CD8-positive, alpha-beta memory T cell (primary cell): ENCODE measurements at regions of chr1 and their contacts with region 1.

Region 1: DNA sequence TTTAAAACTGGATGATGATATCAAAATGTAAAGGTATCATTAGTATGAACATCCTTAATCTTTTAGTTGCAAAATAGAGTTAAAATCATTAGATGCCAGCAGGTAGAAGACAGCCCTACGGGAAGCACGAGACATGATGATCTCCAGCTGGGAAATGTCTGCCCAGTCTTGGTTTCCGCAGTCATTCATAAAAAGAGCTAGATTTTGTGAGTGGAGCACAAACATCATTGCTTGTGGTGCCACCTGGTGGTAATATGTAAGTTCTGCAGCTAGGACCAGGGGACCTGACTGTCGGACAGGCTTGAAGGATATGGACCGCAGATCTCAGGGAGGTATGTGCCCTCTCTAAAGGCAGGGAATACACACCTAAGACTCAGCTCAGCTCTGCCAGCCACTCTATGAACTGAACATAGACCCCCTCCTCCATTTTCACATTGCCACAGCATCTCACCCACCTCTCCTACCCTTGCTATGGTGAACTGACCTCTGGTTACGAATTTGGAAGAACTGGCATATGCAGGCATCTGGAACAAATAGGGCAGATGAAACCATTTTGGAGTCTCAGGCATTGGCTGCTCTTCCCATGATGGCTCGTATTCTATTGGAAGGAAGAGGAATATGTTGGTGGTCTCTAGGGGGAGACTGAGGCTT is 9.2 kb downstream of the FCMR start:
- DNase-seq: peak in 4 of 5 donors; percentile 51 to 74 (median 67)
- H3K4me3 ChIP-seq: no peak overlapping the region
- H3K4me3 Mint-ChIP-seq: peak overlapping the region; percentile 21 to 64 (median 43)
- H3K27ac ChIP-seq: no peak overlapping the region
- H3K27ac Mint-ChIP-seq: peak overlapping the region in 6 of 8 donors; percentile 69 to 95 (median 90)
- H3K4me1 ChIP-seq: peaks cover 91% of the 10 kb centered on the region
- H3K4me1 Mint-ChIP-seq: peaks cover 85 to 95% (median 95%) of the 10 kb centered on the region in 3 donors
- H3K27me3 ChIP-seq: no peaks in the 10 kb centered on the region
- H3K27me3 Mint-ChIP-seq: peaks cover 0 to 1% of the 10 kb centered on the region in 2 donors

Region 2: DNA sequence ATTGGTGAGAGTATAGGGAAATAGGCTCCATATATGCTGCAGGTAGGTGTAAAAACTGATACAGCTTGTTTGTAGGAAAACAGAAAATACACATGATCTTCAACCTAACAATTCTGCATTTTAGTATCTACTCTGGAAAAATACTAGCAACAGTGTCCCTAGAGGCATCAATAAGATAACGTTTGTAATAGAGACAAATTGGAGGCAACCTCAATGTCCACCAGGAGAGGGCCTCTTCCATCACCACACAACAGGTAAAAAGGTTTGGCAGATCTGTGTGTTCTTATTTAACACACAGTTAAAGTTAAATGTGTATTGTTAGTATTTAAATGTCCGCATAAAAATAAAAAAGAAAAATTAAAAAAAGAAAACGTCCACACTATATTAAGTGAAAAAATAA is 305.7 kb before region 1 on chr1:
- CTCF ChIA-PET with region 1: no interaction called
- POLR2A ChIA-PET with region 1: no interaction called
- DNase-seq: no peak
- H3K4me3 ChIP-seq: no peak overlapping the region
- H3K4me3 Mint-ChIP-seq: no peak overlapping the region
- H3K27ac ChIP-seq: no peak overlapping the region
- H3K27ac Mint-ChIP-seq: no peak overlapping the region
- H3K4me1 ChIP-seq: peaks cover 7% of the 10 kb centered on the region
- H3K4me1 Mint-ChIP-seq: peaks cover 11 to 18% (median 18%) of the 10 kb centered on the region in 3 donors
- H3K27me3 ChIP-seq: no peaks in the 10 kb centered on the region
- H3K27me3 Mint-ChIP-seq: no peaks in the 10 kb centered on the region

Region 3: GRCh38 chr1:206635080-206635977 is 277.2 kb before region 1 on chr1 and contains the start of gene DYRK3:
- CTCF ChIA-PET with region 1: interaction called, 11 read pairs
- POLR2A ChIA-PET with region 1: no interaction called
- DNase-seq: peak; percentile 84 to 94 (median 87)
- H3K4me3 ChIP-seq: peak within 1 kb of the TSS; percentile 62
- H3K4me3 Mint-ChIP-seq: peak within 1 kb of the TSS; percentile 85 to 96 (median 89)
- H3K27ac ChIP-seq: peak within 1 kb of the TSS; percentile 59
- H3K27ac Mint-ChIP-seq: peak within 1 kb of the TSS; percentile 61 to 95 (median 90)
- H3K4me1 ChIP-seq: peaks cover 13% of the 10 kb centered on the region
- H3K4me1 Mint-ChIP-seq: peaks cover 13 to 27% (median 18%) of the 10 kb centered on the region in 3 donors
- H3K27me3 ChIP-seq: no peaks in the 10 kb centered on the region
- H3K27me3 Mint-ChIP-seq: peaks cover 10 to 13% of the 10 kb centered on the region in 2 donors
- total RNA-seq, gene DYRK3: 11.0 to 11.7 TPM

Region 4: DNA sequence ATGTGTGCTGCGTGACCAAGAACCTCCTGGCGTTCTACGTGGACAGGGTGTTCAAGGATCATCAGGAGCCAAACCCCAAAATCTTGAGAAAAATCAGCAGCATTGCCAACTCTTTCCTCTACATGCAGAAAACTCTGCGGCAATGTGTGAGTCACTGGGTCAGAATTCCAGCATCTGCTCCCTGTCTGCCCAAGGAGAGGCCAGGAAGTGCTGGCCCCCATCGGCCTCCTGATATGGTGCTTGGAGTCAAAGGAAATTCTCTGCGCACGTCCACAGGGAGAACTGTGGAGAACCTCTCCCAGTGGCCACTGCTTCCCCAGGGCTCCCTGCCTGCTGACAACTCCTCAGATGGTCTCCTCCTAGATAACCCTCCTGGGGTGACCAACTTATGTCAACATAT is 72.7 kb before region 1 on chr1:
- CTCF ChIA-PET with region 1: no interaction called
- POLR2A ChIA-PET with region 1: no interaction called
- DNase-seq: no peak
- H3K4me3 ChIP-seq: no peak overlapping the region
- H3K4me3 Mint-ChIP-seq: no peak overlapping the region
- H3K27ac ChIP-seq: no peak overlapping the region
- H3K27ac Mint-ChIP-seq: no peak overlapping the region
- H3K4me1 ChIP-seq: no peaks in the 10 kb centered on the region
- H3K4me1 Mint-ChIP-seq: no peaks in the 10 kb centered on the region
- H3K27me3 ChIP-seq: no peaks in the 10 kb centered on the region
- H3K27me3 Mint-ChIP-seq: peaks cover 0 to 3% of the 10 kb centered on the region in 2 donors

Region 5: GRCh38 chr1:206856674-206857464 is 55.7 kb before region 1 on chr1:
- CTCF ChIA-PET with region 1: interaction called, 10 read pairs
- POLR2A ChIA-PET with region 1: no interaction called
- DNase-seq: peak in 1 of 5 donors; percentile 28
- H3K4me3 ChIP-seq: no peak overlapping the region
- H3K4me3 Mint-ChIP-seq: no peak overlapping the region
- H3K27ac ChIP-seq: no peak overlapping the region
- H3K27ac Mint-ChIP-seq: peak overlapping the region in 2 of 8 donors; percentile 13 to 14
- H3K4me1 ChIP-seq: peaks cover 9% of the 10 kb centered on the region
- H3K4me1 Mint-ChIP-seq: peaks cover 3 to 5% (median 3%) of the 10 kb centered on the region in 3 donors
- H3K27me3 ChIP-seq: no peaks in the 10 kb centered on the region
- H3K27me3 Mint-ChIP-seq: peaks cover 11 to 15% of the 10 kb centered on the region in 2 donors

Region 6: DNA sequence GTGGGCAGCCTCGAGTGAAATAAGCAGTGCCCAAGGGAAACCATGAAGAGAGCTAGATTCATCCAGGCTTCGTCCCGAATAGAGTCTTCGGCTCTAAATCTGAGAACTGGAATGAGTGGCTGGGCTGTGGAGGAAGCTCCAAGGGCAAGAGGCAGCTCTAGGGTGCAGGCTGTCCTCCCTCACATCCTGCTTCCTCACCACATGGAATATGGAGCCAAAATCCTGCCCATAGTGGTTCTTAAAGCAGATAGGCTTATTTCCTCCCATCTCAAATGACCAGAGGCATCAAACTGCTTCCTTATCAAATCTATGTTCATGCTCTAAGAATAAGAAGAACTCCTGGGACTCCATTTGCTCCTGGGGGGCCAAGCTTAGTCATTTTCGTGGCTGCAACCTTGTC is 12.9 kb before region 1 on chr1:
- CTCF ChIA-PET with region 1: interaction called, 11 read pairs
- POLR2A ChIA-PET with region 1: interaction called, 10 read pairs
- DNase-seq: no peak
- H3K4me3 ChIP-seq: no peak overlapping the region
- H3K4me3 Mint-ChIP-seq: no peak overlapping the region
- H3K27ac ChIP-seq: no peak overlapping the region
- H3K27ac Mint-ChIP-seq: peak overlapping the region in 6 of 8 donors; percentile 59 to 87 (median 72)
- H3K4me1 ChIP-seq: peaks cover 24% of the 10 kb centered on the region
- H3K4me1 Mint-ChIP-seq: peaks cover 32 to 52% (median 32%) of the 10 kb centered on the region in 3 donors
- H3K27me3 ChIP-seq: no peaks in the 10 kb centered on the region
- H3K27me3 Mint-ChIP-seq: no peaks in the 10 kb centered on the region

Region 7: GRCh38 chr1:206935491-206936067 is 23.0 kb after region 1 on chr1:
- CTCF ChIA-PET with region 1: interaction called, 138 read pairs
- POLR2A ChIA-PET with region 1: no interaction called
- DNase-seq: peak in 3 of 5 donors; percentile 13 to 49 (median 18)
- H3K4me3 ChIP-seq: no peak overlapping the region
- H3K4me3 Mint-ChIP-seq: no peak overlapping the region
- H3K27ac ChIP-seq: no peak overlapping the region
- H3K27ac Mint-ChIP-seq: no peak overlapping the region
- H3K4me1 ChIP-seq: peaks cover 16% of the 10 kb centered on the region
- H3K4me1 Mint-ChIP-seq: peaks cover 18 to 25% (median 24%) of the 10 kb centered on the region in 3 donors
- H3K27me3 ChIP-seq: no peaks in the 10 kb centered on the region
- H3K27me3 Mint-ChIP-seq: peaks cover 0 to 4% of the 10 kb centered on the region in 2 donors

Region 8: GRCh38 chr1:207077470-207078377 is 165.2 kb after region 1 on chr1:
- CTCF ChIA-PET with region 1: no interaction called
- POLR2A ChIA-PET with region 1: no interaction called
- DNase-seq: peak; percentile 18 to 73 (median 57)
- H3K4me3 ChIP-seq: no peak overlapping the region
- H3K4me3 Mint-ChIP-seq: no peak overlapping the region
- H3K27ac ChIP-seq: no peak overlapping the region
- H3K27ac Mint-ChIP-seq: peak overlapping the region in 1 of 8 donors; percentile 45
- H3K4me1 ChIP-seq: no peaks in the 10 kb centered on the region
- H3K4me1 Mint-ChIP-seq: peaks cover 0 to 1% (median 0%) of the 10 kb centered on the region in 3 donors
- H3K27me3 ChIP-seq: no peaks in the 10 kb centered on the region
- H3K27me3 Mint-ChIP-seq: peaks cover 6 to 32% of the 10 kb centered on the region in 2 donors